HEK293 (cell line): ENCODE measurements at regions of chr17 and their contacts with region 1.

Region 1: DNA sequence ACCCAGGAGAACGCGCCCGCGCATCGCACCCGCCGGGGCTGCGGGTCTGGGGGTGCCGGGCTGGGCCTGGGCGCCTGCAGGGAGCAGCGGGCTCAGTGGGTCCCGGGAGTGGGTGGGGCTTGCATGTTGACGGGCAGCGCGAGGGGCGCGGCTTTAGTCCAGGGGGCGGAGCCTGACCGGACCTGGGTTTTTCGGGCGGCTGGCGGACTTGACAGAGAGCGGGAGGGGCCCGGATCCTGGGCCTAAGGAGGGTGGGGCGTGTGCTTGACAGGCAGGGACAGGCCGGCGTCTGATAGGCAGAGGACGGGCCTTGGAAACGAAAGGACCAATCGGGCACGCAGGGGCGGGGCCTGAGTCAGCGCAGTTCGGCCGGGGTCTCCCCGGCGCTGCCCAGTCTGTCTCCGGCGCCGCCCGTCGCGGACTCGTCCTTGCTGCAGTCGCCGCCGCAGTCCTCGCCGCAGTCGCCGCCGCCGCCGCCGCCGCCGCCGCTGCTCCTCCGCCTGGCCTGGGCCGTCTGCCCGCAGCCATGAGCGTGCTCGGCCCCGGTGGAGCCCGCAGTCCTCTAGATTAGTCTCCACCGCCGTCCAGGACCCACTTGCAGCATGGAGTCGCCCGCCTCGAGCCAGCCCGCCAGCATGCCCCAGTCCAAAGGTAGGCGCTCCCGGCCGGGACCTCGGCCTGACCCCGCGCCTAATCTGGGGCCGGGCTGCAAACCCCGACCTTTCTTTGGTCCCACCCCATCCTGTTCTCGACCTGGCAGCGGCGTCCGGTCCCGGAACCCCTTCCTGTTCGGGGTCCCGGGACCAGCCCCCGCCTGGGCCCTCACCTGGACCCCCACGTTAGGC is at the start of gene MAP2K3:
- H3K4me3 ChIP-seq: peak within 1 kb of the TSS; percentile 68
- H3K27ac ChIP-seq: peak within 1 kb of the TSS; percentile 70
- H3K4me1 ChIP-seq: peaks cover 25% of the 10 kb centered on the region
- CTCF ChIP-seq: no peak

Region 2: DNA sequence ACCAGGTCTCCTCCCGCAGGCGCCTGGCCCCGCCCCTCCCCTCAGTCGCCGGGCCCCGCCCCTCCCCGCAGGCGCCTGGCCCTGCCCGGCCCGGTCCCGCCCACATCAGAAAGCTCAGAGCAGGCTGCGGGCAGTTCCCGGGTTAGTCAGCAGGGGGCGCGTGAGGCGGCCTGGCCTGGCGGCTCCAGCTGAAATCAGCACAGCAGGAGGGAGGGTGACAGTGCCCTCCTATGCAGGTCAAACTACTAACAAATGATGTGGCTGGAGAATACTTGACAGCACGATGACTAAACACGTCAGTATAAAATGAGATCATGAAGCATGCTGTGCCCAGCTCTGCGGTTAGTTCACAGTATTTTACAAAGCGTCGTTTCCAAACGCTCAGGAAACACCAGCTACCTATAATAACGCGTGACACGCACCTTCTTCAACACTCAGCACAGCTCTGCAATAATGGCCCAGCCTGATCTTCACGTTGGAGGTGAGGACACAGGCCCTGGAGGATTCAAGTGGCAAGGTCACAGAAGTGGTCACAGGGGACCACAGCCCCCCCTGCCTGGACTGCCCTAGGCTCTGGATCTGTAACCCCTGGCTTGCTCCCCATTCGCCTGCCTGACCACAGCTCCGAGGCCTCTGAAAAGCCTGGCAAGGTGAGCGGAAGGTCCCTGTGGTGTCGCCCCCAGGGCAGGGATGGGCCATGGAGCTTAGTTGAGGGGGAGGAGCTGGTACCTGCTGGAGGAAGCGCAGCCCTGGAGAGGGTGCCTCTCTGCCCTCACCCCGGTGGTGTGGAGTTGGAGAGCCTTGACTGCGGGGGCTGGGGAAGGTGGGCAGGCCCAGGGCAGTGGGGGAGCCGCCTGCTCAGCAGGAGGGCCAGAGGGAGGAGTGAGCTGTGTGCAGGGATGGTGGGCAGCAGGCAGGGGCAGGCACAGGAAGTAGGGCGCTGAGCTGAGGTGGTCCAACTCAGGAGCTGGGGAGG is 172.8 kb after region 1 on chr17:
- CTCF ChIA-PET with region 1: interaction called, 11 read pairs
- POLR2A ChIA-PET with region 1: interaction called, 4 read pairs
- H3K4me3 ChIP-seq: no peak overlapping the region; the same call in none of the 2 replicates
- H3K27ac ChIP-seq: no peak overlapping the region
- H3K4me1 ChIP-seq: peaks cover 6% of the 10 kb centered on the region
- CTCF ChIP-seq: peak; percentile 91